AG04450 (cell line): ENCODE measurements at regions of chr11 and their contacts with region 1.

Region 1: DNA sequence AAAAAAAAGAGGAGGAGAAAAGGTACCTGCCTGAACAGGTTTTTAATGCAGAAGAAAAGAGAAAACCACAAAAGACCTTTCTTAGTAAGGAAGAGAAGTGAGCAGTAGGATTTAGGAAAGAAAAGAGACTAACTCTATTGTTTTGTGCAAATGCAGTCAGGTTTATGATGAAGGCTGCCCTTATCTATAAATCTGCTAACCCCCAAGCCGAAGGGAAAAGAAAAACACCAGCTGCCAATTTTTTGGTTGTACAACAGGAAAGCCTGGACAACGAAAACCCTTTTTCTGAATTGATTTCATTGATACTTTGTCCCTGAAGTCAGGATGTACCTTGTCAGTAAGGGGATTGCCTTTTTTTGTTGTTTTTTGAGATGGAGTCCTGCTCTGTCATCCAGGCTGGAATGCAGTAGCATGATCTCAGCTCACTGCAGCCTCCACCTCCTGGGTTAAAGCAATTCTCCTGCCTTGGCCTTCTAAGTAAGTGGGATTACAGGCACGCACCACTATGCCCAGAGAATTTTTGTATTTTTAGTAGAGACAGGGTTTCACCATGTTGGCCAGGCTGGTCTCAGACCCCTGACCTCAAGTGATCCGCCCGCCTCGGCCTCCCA is 21.2 kb downstream of the POLD4 start:
- DNase-seq: no peak
- H3K4me3 ChIP-seq: no peak overlapping the region
- H3K27ac ChIP-seq: no peak overlapping the region
- H3K27me3 ChIP-seq: no peaks in the 10 kb centered on the region
- CTCF ChIP-seq: no peak

Region 2: GRCh38 chr11:67345920-67346799 is 14.0 kb after region 1 on chr11:
- CTCF ChIA-PET with region 1: interaction called, 18 read pairs
- POLR2A ChIA-PET with region 1: interaction called, 8 read pairs
- DNase-seq: no peak
- H3K4me3 ChIP-seq: no peak overlapping the region
- H3K27ac ChIP-seq: no peak overlapping the region
- H3K27me3 ChIP-seq: no peaks in the 10 kb centered on the region
- CTCF ChIP-seq: peak; percentile 82